Left colon (tissue), 2 donors: ENCODE measurements at regions of chr10 and their contacts with region 1.

Region 1: DNA sequence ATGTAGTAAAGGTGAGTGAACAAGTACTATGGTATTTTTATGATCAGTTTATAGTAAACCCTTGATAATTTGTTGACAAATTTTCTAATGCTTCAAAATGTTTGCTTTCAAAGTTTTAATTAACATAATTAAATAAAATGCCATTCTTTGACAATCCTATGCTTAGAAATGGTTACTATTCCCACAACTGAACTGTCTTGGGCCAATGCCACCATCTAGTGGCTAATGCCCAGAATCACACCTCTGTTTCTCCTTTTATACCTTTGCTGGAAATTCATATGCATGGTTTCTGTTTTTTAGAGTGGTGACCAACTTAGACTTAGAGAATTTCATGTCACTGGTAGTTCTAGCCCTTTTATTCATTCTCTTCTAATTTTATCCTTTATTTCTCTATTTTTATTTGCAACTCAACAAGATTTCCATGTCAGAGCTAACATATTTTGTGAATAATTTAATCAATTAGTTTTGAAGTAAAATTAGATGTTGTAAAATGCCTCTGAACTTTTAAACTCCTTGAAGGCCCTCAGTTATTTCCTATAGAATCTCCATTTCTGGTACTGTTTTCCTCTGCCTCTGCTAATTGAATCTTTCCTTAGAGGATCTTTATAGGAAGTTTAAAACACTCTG is 31.1 kb downstream of the PCGF5 start:
- DNase-seq: peak in 1 of 2 donors; percentile 37
- ATAC-seq: peak; percentile 80

Region 2: DNA sequence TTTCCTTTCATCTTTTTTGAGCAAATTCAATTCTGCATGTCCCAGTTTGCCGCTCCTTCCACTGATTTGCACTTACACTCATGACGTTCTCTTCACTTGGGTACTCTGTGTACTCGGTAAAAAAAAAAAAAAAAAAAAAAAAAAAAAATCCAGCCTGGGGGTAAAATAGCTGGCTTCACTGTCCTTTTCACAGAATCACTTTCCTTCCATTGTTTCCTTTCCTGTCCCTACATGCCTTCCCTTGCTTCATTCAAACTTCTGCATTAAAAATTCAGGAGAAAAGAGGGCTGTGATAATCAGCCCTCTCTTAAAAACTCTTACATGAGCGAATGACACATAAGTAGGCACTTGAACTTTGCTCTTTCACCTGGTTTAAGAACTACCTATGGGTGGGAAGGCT is 339.4 kb before region 1 on chr10:
- intact Hi-C with region 1: loop called in 1 of 2 experiments (anchors 5 kb)
- DNase-seq: no peak
- ATAC-seq: no peak

Region 3: DNA sequence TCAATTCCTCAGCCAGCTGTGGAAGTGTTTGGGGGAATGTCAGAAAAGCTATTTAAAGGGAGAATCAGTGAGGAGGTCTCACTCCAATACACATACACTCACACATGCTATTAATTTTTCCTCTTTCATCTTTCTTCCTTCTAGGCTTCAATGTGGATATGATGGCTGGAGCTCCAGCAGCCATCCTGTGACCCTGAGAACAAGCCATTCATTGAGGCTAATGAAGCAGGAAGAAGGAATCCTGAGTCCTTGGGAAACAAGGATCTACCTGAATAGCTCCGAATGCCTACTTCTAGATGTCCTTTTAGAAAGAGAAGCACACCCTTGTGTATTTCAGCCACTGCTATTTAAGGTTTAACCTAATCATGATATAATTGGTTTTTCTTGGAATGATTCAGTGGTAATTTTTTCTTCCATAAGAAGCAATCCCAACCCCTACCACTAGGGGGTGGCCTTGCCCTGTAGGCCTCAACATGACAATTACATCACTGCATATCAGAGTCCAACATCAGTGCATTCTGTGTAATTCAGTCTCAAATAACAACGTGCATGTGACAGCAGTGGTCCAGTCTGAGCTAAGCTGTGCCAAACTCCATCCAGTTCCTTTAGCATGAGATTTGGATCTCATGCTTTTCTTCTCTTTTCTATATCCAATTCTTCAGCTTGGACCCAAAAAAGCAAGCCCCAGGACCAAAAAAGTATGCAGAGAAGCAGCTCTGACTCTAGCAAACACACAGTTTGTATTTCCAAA is 245.4 kb before region 1 on chr10:
- intact Hi-C with region 1: loop called in 1 of 2 experiments (anchors 2 kb)
- DNase-seq: peak in 1 of 2 donors; percentile 62
- ATAC-seq: peak; percentile 90

Region 4: GRCh38 chr10:91381257-91381891 is 129.8 kb after region 1 on chr10:
- intact Hi-C with region 1: no loop called
- DNase-seq: no peak
- ATAC-seq: no peak

Region 5: DNA sequence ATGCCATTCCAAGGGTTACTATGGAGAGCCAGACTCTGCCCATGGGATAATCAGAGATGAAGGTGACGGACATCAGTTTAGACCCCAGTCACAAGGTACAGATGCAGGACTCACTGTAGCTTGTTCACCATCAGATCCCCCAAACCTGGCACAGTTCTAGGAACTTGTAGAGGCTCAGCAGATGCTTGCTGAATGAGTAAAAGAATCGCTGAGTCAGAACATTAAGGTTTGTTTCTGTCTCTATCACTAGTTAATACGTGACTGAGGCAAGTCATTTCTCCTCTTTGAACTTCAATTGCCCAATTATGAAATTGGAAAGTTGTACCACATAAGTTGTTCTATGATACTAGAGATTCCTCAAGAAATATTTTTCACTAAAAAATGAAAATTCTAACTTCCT is 316.3 kb after region 1 on chr10:
- intact Hi-C with region 1: no loop called
- DNase-seq: no peak
- ATAC-seq: no peak